ENCODE measurements at regions of chr9 and their contacts with region 1.

Region 1: GRCh38 chr9:117644133-117644931 is 59.9 kb upstream of the TLR4 start:
- DNase-seq: peak; percentile 73
- H3K4me3 ChIP-seq: peak overlapping the region; percentile 53
- H3K27ac ChIP-seq: peak overlapping the region; percentile 64
- H3K4me1 ChIP-seq: peaks cover 22% of the 10 kb centered on the region
- H3K27me3 ChIP-seq: peaks cover 56% of the 10 kb centered on the region
- CTCF ChIP-seq: peak; percentile 96

Region 2: DNA sequence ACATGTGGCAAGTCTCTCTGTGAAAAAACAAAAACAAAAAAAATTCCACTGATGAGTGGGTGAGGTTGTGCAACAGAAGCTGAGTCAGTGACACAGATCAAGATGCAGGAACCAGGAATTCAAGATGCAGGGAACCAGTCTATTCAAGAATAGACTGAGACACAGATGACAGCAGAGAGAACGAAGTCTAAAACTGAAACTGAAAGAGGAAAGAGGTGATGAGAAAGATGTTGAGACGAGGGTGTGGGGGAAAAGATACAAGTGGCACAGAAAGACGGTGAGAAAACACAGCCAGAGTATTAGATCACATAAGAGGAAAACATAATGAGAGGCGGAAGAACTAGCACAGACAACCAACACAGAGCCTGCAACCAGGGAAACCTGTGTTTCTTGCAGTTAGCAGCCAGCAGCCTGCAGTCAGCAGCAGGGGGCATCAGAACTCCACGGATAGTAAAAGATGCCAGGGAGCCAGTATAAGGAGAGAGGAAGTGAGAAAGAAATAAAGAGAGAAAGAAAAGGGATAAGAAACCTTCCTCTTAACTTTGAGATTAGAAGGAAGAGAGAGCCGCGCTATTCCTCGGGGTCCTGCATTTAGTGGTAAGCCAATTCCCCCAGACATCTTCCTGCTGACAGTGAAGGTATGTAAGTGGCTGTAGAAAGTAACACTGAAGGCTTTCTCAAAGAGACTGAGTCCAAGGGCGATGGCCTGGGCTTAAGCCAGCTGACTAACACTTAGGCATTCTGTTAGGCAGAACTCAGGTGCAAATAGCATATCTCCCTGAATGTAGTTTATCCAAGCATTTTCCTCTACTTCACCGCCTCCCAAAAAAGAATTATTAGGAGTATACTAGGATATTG is 138.8 kb after region 1 on chr9:
- intact Hi-C with region 1: loop called (anchors 10 kb)
- DNase-seq: peak; percentile 59
- H3K4me3 ChIP-seq: peak overlapping the region; percentile 59
- H3K27ac ChIP-seq: peak overlapping the region; percentile 67
- H3K4me1 ChIP-seq: peaks cover 36% of the 10 kb centered on the region
- H3K27me3 ChIP-seq: no peaks in the 10 kb centered on the region
- CTCF ChIP-seq: peak; percentile 84